Right ventricle myocardium inferior (tissue), 1 donor: ENCODE measurements at regions of chr17 and their contacts with region 1.

Region 1: DNA sequence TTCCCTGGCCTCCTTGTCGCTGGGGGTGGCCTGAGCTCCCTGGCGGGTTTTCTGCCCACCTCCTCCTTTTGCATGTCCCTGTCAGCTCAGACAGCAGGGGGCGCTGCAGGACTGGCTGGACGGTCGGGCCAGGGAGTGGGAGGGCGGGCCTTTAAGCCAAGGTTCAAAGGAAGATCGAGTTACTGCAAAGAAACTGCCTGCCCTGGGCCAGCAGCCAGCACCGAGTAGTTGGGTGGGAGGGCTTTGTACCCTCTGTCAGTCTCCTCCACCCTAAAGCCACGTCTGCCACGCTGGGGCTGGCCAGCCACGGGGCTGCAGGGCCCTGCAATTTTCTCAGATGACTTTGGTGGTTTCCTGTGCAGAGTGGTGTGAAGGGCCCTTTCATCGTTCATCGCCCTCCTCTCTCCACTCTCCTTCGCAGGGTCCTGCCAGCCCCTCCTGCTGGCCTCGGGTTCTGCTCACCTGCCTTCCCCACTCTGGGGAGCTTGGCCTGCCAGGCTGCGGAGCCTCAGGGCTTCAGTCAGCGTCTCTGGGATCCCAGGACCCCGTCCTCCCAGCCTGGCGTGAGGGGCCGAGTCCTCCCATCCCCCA is 12.3 kb downstream of the GPR142 start:
- DNase-seq: peak; percentile 97
- ATAC-seq: peak; percentile 93

Region 2: GRCh38 chr17:74430706-74431567 is 51.3 kb after region 1 on chr17:
- intact Hi-C with region 1: loop called (anchors 5 kb)
- DNase-seq: peak; percentile 91
- ATAC-seq: peak; percentile 70

Region 3: DNA sequence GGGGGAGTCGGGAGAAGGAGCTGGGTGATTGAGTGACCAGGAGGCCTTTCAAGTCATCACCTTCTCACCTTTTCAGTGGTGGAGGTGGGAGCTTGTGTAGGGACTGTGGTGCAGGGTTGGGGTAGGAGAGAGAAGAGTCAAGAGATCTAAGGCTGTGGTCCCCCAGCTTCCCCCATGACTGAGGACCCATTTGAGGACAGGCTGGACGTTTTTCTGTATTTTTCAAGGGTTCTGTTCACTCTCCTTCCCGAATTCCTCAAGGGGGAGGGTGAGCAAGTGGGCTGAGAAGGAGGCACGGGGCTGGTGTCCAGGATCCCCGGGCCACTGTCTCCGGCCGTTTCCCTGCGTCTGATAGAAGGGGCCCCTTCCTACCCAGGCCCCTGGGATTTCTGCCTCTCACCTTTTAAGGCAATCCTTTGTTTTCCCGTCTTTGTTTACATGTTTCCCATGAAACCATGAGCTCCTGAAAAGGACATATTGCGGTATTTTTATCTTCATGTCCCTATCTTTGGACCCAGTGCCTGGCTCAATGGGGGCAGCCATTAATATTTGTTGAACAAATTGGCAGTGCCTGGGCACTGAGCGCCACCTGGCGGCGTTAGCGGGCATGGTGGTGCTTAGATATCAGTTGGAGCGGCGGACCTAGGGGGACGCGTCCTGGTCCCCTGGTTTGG is 77.7 kb after region 1 on chr17:
- intact Hi-C with region 1: loop called (anchors 1 kb)
- DNase-seq: peak; percentile 93
- ATAC-seq: no peak

Region 4: GRCh38 chr17:74601944-74602572 is 222.5 kb after region 1 on chr17:
- intact Hi-C with region 1: loop called (anchors 10 kb)
- DNase-seq: no peak
- ATAC-seq: no peak